H1 (cell line): ENCODE measurements at regions of chrX and their contacts with region 1.

Region 1: GRCh38 chrX:17535229-17535628 is 160.2 kb downstream of the NHS start:
- DNase-seq: peak in 1 of 2 experiments; percentile 60
- H3K4me3 ChIP-seq: no peak overlapping the region
- H3K27ac ChIP-seq: no peak overlapping the region
- H3K4me1 ChIP-seq: peaks cover 0 to 6% (median 0%) of the 10 kb centered on the region in 4 experiments; a peak in 3 of 7 replicates
- H3K27me3 ChIP-seq: no peaks in the 10 kb centered on the region
- CTCF ChIP-seq: peak; percentile 39 to 69 (median 62)
- EP300 ChIP-seq: no peak
- POLR2A ChIP-seq: no peak
- RAD21 ChIP-seq: peak; percentile 67 to 84

Region 2: DNA sequence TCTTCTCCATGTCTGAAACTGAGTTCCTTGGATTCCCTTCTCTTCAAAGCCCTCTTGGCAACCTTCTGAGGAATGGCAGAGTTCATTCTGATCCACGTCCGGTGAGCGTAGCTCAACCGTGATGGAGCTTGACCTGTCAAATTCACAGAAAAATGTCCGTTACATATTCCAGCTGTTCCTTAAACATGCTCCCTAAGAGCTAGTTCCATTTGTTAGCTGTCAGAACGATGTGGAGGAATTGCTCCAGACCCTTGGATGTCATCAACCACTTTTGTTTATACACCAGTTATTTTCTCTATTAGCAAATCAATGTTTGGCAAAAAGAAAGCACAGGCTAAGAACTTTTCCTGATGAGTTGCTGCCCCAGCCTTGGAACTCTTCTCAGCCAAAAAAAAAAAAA is 110.1 kb before region 1 on chrX:
- CTCF ChIA-PET with region 1: no interaction called
- POLR2A ChIA-PET with region 1: no interaction called
- DNase-seq: no peak
- H3K4me3 ChIP-seq: no peak overlapping the region
- H3K27ac ChIP-seq: no peak overlapping the region
- H3K4me1 ChIP-seq: no peaks in the 10 kb centered on the region
- H3K27me3 ChIP-seq: no peaks in the 10 kb centered on the region
- CTCF ChIP-seq: no peak
- EP300 ChIP-seq: no peak
- POLR2A ChIP-seq: no peak
- RAD21 ChIP-seq: no peak

Region 3: DNA sequence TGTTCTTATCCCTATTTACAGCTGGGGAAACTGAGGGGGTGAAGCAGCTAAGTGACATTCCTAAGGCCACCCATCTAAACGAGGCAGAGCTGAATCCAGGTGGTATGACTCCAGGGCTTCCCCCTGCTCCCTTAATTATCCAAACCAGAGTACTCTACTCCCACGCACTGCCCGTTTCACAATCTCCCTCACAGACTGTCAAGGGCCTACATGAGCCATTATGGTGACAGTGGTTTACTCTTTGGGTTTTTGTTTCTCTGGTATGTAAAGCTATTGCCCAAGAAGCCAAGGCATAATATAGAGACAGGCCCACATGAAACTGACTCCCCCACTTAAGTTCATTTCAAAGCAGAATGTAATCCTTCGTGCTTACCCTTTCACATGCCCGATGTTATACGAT is 65.1 kb before region 1 on chrX:
- CTCF ChIA-PET with region 1: no interaction called
- POLR2A ChIA-PET with region 1: no interaction called
- DNase-seq: no peak
- H3K4me3 ChIP-seq: no peak overlapping the region
- H3K27ac ChIP-seq: no peak overlapping the region
- H3K4me1 ChIP-seq: no peaks in the 10 kb centered on the region
- H3K27me3 ChIP-seq: no peaks in the 10 kb centered on the region
- CTCF ChIP-seq: no peak
- EP300 ChIP-seq: no peak
- POLR2A ChIP-seq: no peak
- RAD21 ChIP-seq: no peak

Region 4: GRCh38 chrX:17590892-17591740 is 55.9 kb after region 1 on chrX:
- CTCF ChIA-PET with region 1: interaction called, 33 read pairs
- POLR2A ChIA-PET with region 1: no interaction called
- DNase-seq: peak; percentile 36 to 49
- H3K4me3 ChIP-seq: no peak overlapping the region
- H3K27ac ChIP-seq: no peak overlapping the region
- H3K4me1 ChIP-seq: no peaks in the 10 kb centered on the region; a peak in 1 of 7 replicates
- H3K27me3 ChIP-seq: no peaks in the 10 kb centered on the region
- CTCF ChIP-seq: peak; percentile 50 to 77 (median 72)
- EP300 ChIP-seq: no peak
- POLR2A ChIP-seq: no peak
- RAD21 ChIP-seq: peak; percentile 81 to 86

Region 5: GRCh38 chrX:17689971-17690409 is 154.8 kb after region 1 on chrX:
- CTCF ChIA-PET with region 1: interaction called, 18 read pairs
- POLR2A ChIA-PET with region 1: no interaction called
- DNase-seq: no peak
- H3K4me3 ChIP-seq: no peak overlapping the region
- H3K27ac ChIP-seq: no peak overlapping the region
- H3K4me1 ChIP-seq: no peaks in the 10 kb centered on the region
- H3K27me3 ChIP-seq: no peaks in the 10 kb centered on the region
- CTCF ChIP-seq: peak in 2 of 3 experiments; percentile 37 to 54; a peak in 2 of 4 replicates
- EP300 ChIP-seq: no peak
- POLR2A ChIP-seq: no peak
- RAD21 ChIP-seq: peak; percentile 68 to 69